HAP-1 (cell line): ENCODE measurements at regions of chr3 and their contacts with region 1.

Region 1: DNA sequence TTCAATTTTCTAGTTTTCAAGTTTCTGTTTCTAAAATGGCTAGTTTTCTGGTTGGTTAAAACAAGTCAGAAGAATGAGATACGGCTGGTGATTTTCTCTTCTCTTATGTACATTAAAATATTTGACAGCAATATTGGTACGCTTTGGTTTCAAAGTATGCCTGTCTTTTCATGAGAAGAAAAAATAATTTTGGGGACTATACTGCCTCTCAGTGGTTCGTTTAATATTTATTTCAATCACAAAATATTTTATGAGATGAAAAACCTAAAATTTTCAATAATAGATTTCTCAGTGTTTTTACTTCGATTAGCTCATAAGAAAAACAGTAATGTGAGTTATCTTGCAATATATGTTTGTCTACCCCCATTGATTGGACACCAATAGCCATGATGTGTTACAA is 72.8 kb upstream of the AADACL2 start:
- DNase-seq: peak in 1 of 2 experiments; percentile 34
- H3K4me3 ChIP-seq: no peak overlapping the region
- H3K4me1 ChIP-seq: no peaks in the 10 kb centered on the region
- H3K27me3 ChIP-seq: no peaks in the 10 kb centered on the region

Region 2: GRCh38 chr3:151468284-151468917 is 192.5 kb before region 1 on chr3:
- in situ Hi-C with region 1: loop called (anchors 25 kb)
- DNase-seq: peak; percentile 78 to 79
- H3K4me3 ChIP-seq: no peak overlapping the region
- H3K4me1 ChIP-seq: peaks cover 2% of the 10 kb centered on the region; the same call in 1 of the 2 replicates
- H3K27me3 ChIP-seq: no peaks in the 10 kb centered on the region